PC-9 (cell line): ENCODE measurements at regions of chr6 and their contacts with region 1.

Region 1: DNA sequence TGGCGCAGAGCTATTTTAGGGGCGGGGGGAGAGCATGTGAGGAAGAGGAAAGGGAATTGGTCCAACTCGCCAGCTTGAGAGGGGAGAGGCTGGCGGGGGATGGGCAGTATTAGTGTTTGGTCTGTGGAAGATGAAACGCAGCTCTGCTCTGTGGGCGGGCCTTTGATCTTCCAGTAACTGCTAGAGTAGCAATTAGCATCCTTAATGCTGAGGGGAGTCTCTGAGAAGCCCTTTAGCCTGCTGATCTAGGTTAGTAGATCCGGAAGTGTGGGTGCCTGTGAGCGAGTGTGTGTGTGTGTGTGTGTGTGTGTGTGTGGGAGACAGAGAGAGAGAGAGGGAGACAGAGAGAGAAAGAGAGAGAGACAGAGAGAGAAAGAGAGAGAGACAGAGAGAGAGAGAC is 117.2 kb upstream of the BACH2 start:
- DNase-seq: no peak
- H3K4me3 ChIP-seq: no peak overlapping the region
- H3K27ac ChIP-seq: no peak overlapping the region
- H3K4me1 ChIP-seq: peaks cover 23% of the 10 kb centered on the region
- H3K27me3 ChIP-seq: no peaks in the 10 kb centered on the region
- CTCF ChIP-seq: no peak

Region 2: DNA sequence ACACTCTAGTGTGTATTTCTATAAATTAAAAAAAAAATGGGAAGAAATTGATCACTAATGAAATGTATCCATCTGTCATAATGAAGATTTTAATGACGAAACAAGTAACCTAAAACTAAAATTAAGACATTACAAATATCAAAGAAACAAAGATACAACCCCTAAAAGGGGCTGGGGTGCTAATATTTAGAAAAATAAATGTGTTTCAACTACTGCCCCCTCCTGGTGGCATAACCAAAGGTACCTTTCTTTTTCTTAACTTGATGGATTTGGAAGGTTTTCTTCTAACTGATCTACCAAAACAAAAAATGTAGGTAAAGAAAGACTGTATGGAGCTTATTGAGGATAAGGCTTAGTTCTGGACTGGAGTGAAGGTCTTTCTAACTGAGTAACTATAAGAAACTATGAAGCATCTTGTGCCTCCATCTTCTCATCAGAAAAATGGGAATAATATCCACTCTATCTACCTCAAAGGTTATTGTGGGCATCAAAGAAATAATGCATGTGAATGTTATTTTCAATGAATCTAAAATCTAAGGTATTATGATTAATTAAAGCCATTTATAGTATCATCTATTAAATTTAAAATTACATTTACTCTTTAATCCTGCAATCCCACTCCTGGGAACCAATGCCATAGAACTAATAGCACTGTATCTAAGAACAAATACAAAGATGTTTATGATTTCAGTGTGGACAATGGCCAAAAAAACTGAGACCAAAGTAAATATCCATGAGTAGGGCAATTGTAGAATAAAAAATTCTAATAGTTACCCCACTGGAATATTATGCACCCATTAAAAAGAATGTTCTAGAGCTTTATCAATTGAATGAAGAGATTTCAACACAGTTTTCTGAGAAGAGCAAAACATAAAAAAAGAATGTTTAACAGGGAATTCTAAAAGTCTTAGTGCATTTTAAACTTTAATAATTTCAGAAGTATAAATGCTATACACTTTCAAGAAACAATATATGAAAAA is 234.4 kb before region 1 on chr6:
- CTCF ChIA-PET with region 1: no interaction called
- POLR2A ChIA-PET with region 1: no interaction called
- intact Hi-C with region 1: loop called (anchors 10 kb)
- DNase-seq: no peak
- H3K4me3 ChIP-seq: no peak overlapping the region
- H3K27ac ChIP-seq: no peak overlapping the region
- H3K4me1 ChIP-seq: no peaks in the 10 kb centered on the region
- H3K27me3 ChIP-seq: no peaks in the 10 kb centered on the region
- CTCF ChIP-seq: peak; percentile 64

Region 3: GRCh38 chr6:90296346-90297114 is 117.3 kb before region 1 on chr6 and contains the start of gene BACH2:
- CTCF ChIA-PET with region 1: no interaction called
- POLR2A ChIA-PET with region 1: no interaction called
- intact Hi-C with region 1: loop called (anchors 2 kb)
- DNase-seq: peak; percentile 57 to 78
- H3K4me3 ChIP-seq: peak within 1 kb of the TSS; percentile 57
- H3K27ac ChIP-seq: no peak within 1 kb of the TSS
- H3K4me1 ChIP-seq: peaks cover 9% of the 10 kb centered on the region; the same call in 1 of the 2 replicates
- H3K27me3 ChIP-seq: 0 out of 2 replicates have a peak, but pooled peaks cover 5% of the 10 kb centered on the region
- CTCF ChIP-seq: no peak
- total RNA-seq, gene BACH2: 2.3 and 4.2 TPM in 2 replicates

Region 4: DNA sequence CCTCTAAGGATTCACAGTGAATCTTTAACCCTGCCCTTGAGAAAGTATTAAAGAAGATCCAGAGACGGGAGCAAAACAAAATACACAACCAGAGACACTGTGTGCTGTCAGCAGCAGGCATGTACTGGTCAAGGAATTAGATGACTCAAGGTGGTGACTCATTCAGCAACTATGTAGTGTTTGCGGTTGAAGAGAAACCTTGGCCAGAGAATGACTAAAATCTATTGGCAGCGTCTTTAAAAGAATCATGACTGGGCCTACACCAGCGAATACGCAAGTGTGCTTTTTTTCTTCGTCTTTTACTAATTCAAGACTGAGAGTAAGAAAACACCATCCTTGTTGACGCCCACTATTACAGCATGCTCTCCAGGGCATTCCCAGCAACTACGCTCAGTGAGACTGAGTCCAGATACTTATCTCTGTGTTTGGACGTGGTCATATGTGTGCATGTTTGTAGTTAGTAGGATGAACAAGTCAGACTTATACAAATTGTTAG is 44.8 kb before region 1 on chr6:
- CTCF ChIA-PET with region 1: no interaction called
- POLR2A ChIA-PET with region 1: no interaction called
- intact Hi-C with region 1: loop called (anchors 1 kb)
- DNase-seq: peak; percentile 72 to 97
- H3K4me3 ChIP-seq: no peak overlapping the region
- H3K27ac ChIP-seq: peak overlapping the region; percentile 78
- H3K4me1 ChIP-seq: peaks cover 21% of the 10 kb centered on the region
- H3K27me3 ChIP-seq: no peaks in the 10 kb centered on the region
- CTCF ChIP-seq: no peak

Region 5: DNA sequence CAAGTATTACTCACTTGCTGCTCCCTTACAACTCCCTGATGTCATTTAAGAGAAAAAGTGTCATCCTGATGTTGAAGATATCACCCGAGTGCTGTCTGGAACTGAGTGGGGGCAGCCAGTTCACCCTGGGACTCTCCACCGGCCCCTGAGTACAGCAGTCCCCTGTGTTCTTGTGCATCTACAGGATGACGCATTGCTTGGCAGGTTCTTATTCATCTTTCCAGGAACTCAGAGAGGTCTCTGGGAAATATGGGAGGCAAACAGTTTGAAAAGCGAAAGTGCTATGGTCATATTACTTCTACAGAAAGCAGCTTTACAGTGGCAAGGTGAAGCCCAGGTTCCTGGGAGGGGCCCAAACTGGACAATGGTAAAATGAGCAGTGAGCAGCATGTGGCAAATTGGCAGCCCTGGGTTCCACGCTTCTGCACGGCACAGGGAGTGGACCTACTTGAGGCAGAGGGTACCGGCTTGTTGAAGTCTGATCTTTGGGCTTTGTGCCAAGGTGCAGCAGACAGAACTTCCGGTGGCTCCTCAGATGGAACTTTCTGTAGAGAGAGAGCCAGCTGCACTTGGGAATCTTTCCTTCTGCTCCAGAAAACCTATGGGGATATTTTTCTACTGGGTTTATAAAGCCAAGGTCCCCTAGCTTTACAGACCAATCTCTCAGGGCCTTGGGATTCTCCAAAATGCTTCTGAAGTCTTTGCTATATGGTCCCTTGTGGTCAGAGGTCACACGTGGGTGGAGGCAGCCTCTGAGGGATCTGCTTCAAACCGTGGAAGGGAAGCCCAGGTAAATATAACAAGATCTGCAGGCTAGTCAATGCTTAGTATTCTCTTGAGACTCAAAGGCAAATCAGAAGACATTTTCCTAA is 44.7 kb after region 1 on chr6:
- CTCF ChIA-PET with region 1: no interaction called
- POLR2A ChIA-PET with region 1: no interaction called
- intact Hi-C with region 1: loop called (anchors 2 kb)
- DNase-seq: no peak
- H3K4me3 ChIP-seq: no peak overlapping the region
- H3K27ac ChIP-seq: no peak overlapping the region
- H3K4me1 ChIP-seq: peaks cover 8% of the 10 kb centered on the region
- H3K27me3 ChIP-seq: no peaks in the 10 kb centered on the region
- CTCF ChIP-seq: no peak

Region 6: GRCh38 chr6:91387290-91388062 is 973.6 kb after region 1 on chr6:
- CTCF ChIA-PET with region 1: no interaction called
- POLR2A ChIA-PET with region 1: no interaction called
- intact Hi-C with region 1: no loop called
- DNase-seq: no peak
- H3K4me3 ChIP-seq: no peak overlapping the region
- H3K27ac ChIP-seq: no peak overlapping the region
- H3K4me1 ChIP-seq: no peaks in the 10 kb centered on the region
- H3K27me3 ChIP-seq: no peaks in the 10 kb centered on the region
- CTCF ChIP-seq: no peak